MCF 10A (cell line): ENCODE measurements at regions of chr10 and their contacts with region 1.

Region 1: DNA sequence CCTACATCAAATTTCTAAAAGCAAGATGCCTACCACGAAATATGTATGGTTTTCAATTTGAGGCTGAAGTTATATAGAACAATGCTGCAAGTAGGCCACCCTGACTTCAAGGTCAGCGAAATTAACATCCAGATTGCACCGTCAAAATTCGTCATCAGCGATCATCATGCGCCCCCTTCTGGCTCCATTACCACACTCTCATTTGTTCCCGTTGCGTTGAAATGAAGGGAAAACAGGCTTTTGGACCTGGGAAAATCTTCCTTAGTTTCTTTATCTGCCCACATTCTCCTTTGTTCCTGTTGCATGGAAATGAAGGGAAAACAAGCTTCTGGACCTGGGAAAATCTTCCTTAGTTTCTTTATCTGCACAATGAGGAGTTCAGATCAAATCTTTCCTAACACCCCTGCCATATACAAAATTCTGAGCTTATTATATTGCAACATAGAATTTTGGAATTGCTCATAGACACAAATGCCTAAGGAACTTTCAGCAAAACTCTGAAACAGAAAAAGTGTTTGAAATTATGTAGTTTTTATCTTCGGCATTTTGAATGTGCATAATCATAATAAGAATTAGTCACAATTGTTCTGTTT is 98.2 kb upstream of the PRKCQ start:
- DNase-seq: peak; percentile 52
- H3K4me3 Mint-ChIP-seq: no peak overlapping the region
- H3K27ac Mint-ChIP-seq: no peak overlapping the region
- H3K4me1 Mint-ChIP-seq: peaks cover 9% of the 10 kb centered on the region
- H3K27me3 Mint-ChIP-seq: no peaks in the 10 kb centered on the region
- CTCF ChIP-seq: peak; percentile 31

Region 2: GRCh38 chr10:6095810-6096570 is 582.3 kb before region 1 on chr10:
- CTCF ChIA-PET with region 1: interaction called, 10 read pairs
- POLR2A ChIA-PET with region 1: no interaction called
- intact Hi-C with region 1: no loop called
- DNase-seq: no peak
- H3K4me3 Mint-ChIP-seq: no peak overlapping the region
- H3K27ac Mint-ChIP-seq: no peak overlapping the region
- H3K4me1 Mint-ChIP-seq: peaks cover 14% of the 10 kb centered on the region
- H3K27me3 Mint-ChIP-seq: no peaks in the 10 kb centered on the region
- CTCF ChIP-seq: no peak